HEK293 (cell line): ENCODE measurements at regions of chr12 and their contacts with region 1.

Region 1: GRCh38 chr12:94133964-94134795 is 14.2 kb upstream of the PLXNC1 start:
- H3K4me3 ChIP-seq: no peak overlapping the region
- H3K27ac ChIP-seq: no peak overlapping the region
- H3K4me1 ChIP-seq: no peaks in the 10 kb centered on the region
- CTCF ChIP-seq: no peak

Region 2: DNA sequence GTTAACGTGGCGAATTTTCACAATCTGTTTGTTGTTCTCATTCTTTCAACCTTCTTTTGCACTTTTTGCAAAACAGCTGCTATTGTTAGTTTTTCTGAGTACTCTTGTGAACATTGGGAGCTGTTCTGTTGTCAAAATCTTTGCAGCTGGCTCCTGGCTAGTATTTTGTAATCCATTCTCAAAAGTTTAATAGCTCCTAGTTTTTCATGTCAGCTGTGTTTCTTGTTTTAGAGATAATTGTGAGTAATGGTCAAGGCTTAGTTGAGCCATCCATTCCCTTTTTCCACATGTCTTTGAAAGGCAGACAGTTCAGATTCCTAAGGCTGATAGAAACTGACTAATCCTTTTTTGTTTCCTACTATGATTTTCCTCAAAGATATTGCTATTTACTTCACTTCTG is 496.1 kb before region 1 on chr12:
- CTCF ChIA-PET with region 1: no interaction called
- POLR2A ChIA-PET with region 1: no interaction called
- H3K4me3 ChIP-seq: no peak overlapping the region
- H3K27ac ChIP-seq: no peak overlapping the region
- H3K4me1 ChIP-seq: no peaks in the 10 kb centered on the region
- CTCF ChIP-seq: no peak

Region 3: DNA sequence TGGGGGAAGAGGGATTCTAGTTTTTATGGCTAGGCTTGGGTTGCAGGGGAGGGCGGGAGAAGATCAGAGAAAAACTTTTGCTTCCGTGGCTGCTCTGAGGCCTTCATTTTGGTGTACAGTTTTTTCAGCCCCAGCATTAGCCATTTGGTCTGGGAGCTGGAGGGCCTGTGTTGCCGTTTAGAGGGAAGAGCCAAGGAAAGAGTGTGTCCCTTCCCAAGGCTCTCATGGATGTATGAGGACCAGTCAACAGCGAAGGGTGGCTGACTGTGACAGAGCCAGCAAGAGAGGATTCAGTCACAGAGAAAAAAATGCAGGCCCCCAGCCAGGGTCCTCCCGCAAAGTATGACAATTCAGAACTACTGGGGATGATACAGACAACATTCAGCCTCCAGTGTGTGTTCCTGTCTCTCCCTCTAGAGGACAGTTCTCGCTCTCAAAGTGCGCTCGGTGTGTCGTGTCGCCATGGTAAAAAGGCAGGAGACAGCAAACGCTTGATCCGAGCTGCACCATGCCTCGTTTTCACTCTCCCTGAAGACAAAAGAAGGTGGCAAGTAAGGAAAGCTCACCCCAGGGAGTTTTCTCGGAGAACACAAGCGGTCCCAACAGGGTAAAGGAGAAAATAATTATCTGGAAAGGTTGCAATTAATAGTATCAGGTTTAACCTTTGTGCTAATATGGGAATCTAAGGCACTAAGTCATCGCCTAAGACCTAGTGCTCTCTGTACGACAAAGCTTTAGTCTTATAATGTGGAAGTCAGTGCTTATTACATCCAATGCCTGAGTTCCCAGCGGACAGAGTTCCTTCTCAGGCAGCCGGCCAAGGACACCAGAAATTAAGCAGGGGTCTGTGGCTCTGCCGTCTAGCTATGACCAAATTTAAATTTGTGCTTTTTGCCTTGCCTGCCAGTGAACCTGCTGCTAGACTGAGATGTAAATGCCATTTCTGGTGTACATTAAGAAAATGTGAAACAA is 143.1 kb before region 1 on chr12:
- CTCF ChIA-PET with region 1: no interaction called
- POLR2A ChIA-PET with region 1: no interaction called
- H3K4me3 ChIP-seq: no peak overlapping the region
- H3K27ac ChIP-seq: no peak overlapping the region
- H3K4me1 ChIP-seq: no peaks in the 10 kb centered on the region
- CTCF ChIP-seq: no peak

Region 4: DNA sequence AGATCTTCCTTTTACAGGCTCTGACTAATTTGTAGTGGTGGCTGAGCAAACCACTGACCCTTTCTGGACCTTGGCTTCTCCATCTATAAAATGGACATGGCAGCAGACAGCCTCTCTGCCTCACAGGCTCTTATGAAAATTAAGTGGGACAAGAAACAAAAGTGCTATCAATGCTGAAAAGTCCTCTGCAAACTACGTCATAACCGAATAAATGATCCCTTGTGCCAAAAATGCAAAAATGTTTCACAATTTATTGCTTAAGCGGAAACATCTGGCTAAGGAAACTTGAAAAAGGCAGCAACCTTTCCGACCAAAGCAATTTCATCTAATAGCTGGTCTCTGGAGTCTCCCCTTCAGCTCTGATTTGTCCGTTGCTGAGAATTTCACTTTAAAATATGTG is 94.3 kb before region 1 on chr12:
- CTCF ChIA-PET with region 1: no interaction called
- POLR2A ChIA-PET with region 1: no interaction called
- H3K4me3 ChIP-seq: no peak overlapping the region
- H3K27ac ChIP-seq: no peak overlapping the region
- H3K4me1 ChIP-seq: no peaks in the 10 kb centered on the region
- CTCF ChIP-seq: no peak

Region 5: DNA sequence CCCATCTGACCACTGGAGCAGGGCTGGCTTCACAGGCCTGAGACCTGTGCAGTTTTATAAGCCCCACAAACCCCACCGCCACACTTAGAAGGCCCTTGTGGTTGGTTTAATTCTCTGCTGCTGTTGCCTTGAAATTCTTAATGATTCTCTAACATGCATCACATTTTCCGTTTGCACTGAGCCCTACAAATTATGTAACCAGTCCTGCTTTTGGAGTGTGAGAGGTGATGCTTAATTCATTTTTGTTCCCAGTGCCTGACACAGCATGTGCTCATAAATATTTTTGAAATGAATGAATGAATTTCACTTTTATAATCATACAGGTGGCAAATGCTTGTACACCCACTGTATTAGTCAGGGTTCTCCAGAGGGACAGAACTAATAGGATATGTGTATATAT is 38.6 kb before region 1 on chr12:
- CTCF ChIA-PET with region 1: no interaction called
- POLR2A ChIA-PET with region 1: no interaction called
- H3K4me3 ChIP-seq: no peak overlapping the region
- H3K27ac ChIP-seq: no peak overlapping the region
- H3K4me1 ChIP-seq: no peaks in the 10 kb centered on the region
- CTCF ChIP-seq: no peak

Region 6: GRCh38 chr12:94145191-94145983 is 11.2 kb after region 1 on chr12:
- CTCF ChIA-PET with region 1: interaction called, 22 read pairs
- POLR2A ChIA-PET with region 1: no interaction called
- H3K4me3 ChIP-seq: no peak overlapping the region
- H3K27ac ChIP-seq: no peak overlapping the region
- H3K4me1 ChIP-seq: no peaks in the 10 kb centered on the region
- CTCF ChIP-seq: no peak

Region 7: GRCh38 chr12:94532490-94533422 is 398.6 kb after region 1 on chr12:
- CTCF ChIA-PET with region 1: interaction called, 33 read pairs
- POLR2A ChIA-PET with region 1: no interaction called
- H3K4me3 ChIP-seq: no peak overlapping the region
- H3K27ac ChIP-seq: no peak overlapping the region
- H3K4me1 ChIP-seq: no peaks in the 10 kb centered on the region
- CTCF ChIP-seq: peak; percentile 84